ENCODE measurements at regions of chr2 and their contacts with region 1.

Region 1: DNA sequence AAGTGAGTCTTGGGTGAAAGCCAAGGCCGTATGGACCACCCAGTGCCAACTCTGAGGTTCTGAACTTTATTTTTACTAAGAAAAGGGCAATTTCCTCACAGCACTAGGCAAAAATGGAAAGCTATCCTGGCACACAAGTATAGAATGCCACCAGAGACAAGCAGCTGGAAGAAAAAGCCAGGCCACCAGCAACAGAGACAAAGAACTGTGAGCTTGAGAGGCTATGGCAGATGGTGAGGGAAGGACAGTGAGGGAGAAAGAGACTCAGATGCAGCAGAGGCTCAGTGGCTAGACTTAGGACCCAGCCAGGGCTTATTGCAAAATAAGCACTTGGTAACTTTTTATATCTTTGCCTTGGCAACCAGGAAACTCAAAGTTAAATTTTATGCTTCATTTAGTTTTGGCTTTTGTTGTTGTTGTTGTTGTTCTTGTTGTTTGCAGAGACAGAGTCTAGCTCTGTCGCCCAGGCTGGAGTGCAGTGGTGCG is 78.0 kb upstream of the BZW1 start:
- DNase-seq: peak in 14 of 42 donors; percentile 16 to 61 (median 28)

Region 2: DNA sequence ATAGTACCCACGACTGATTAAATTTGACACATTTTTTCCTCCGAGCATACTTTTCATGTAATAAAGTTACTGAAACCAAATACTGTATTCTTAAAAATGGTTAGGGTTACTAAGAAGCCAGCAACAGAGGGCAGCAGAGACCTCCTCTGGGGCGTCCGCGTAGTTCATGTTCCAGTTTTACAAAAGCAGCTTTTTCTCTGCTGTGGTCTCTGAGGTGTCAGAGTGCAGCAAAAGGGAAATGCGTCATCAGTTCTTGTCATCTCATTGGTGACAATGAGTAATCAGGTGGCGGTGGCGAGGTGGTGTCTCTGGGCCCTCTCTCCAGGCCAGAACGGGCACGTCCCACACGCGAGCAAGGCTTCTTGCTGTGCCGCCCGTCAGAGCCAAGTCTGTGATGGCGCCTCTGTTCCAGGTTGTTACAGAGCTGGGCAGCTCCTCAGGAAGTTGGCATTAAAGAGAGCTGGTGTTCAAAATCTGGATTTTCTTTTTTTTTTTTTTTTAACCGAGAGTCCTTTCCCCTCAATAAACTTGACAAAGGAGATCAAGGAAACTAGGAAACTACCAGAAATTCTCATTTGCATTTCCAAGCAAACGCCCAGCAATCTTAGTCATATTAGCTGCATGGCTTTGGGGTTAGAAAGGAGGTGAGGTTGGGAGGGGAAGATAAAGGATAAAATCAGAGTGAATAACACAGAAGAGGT is 20.6 kb before region 1 on chr2:
- intact Hi-C with region 1: loop called (anchors 1 kb)
- DNase-seq: peak; percentile 68 to 96 (median 86)

Measured in head of caudate nucleus (tissue), 42 donors.